Transverse colon (tissue), 4 donors: ENCODE measurements at regions of chr10 and their contacts with region 1.

Region 1: GRCh38 chr10:71893920-71894319 is 42.9 kb upstream of the PSAP start:
- DNase-seq: no peak
- H3K4me3 ChIP-seq: no peak overlapping the region
- H3K27ac ChIP-seq: no peak overlapping the region
- H3K4me1 ChIP-seq: peaks cover 0 to 14% (median 9%) of the 10 kb centered on the region in 4 donors
- H3K27me3 ChIP-seq: peaks cover 3% of the 10 kb centered on the region
- CTCF ChIP-seq: no peak
- EP300 ChIP-seq: no peak
- POLR2A ChIP-seq: no peak

Region 2: DNA sequence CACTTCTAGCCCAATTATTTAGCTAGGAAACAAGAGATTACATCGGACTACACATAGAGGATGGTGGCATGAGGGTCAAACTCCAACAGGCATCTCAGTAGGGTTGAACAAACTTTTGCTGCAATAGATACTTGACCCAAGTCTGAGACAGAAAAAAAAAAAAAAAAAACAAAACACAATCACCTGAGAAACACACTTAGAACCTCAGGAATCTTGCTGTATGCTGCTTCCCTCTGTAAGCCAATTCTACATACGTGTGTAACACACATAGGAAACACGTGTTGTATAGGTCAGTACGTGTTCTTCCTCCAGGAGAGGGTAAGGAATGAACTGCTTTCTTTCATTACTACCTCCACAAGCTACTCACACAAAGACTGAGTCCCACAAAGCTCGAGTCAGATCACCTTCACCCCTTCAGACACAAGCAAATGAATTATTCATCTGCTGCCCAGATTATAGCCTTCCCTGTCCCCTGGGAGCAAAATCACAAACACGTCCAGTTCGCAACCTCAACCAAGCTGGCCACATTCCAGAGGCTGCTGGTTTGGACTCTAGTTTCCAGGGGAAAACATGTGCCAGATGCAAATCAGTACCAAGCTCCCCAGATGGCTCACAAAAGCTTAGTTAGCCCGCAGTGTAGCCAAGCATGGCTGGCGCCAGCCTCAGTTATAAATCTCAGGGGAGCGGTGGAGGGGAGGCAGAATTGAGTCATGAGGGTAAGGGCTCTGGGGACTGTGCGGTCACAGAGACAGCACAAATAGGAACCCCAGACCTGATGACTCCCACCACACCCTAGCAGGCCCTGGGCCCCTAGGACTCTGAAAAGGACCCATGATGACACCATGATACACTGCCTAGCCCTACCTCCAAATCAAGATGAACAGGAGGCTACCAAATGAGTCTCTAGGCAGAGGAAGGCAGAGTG is 58.0 kb before region 1 on chr10:
- in situ Hi-C with region 1: no loop called
- intact Hi-C with region 1: loop called (anchors 10 kb)
- DNase-seq: peak; percentile 65
- H3K4me3 ChIP-seq: no peak overlapping the region
- H3K27ac ChIP-seq: peak overlapping the region; percentile 54 to 73 (median 67)
- H3K4me1 ChIP-seq: peaks cover 26 to 67% (median 47%) of the 10 kb centered on the region in 4 donors
- H3K27me3 ChIP-seq: no peaks in the 10 kb centered on the region
- CTCF ChIP-seq: no peak
- EP300 ChIP-seq: no peak
- POLR2A ChIP-seq: no peak

Region 3: DNA sequence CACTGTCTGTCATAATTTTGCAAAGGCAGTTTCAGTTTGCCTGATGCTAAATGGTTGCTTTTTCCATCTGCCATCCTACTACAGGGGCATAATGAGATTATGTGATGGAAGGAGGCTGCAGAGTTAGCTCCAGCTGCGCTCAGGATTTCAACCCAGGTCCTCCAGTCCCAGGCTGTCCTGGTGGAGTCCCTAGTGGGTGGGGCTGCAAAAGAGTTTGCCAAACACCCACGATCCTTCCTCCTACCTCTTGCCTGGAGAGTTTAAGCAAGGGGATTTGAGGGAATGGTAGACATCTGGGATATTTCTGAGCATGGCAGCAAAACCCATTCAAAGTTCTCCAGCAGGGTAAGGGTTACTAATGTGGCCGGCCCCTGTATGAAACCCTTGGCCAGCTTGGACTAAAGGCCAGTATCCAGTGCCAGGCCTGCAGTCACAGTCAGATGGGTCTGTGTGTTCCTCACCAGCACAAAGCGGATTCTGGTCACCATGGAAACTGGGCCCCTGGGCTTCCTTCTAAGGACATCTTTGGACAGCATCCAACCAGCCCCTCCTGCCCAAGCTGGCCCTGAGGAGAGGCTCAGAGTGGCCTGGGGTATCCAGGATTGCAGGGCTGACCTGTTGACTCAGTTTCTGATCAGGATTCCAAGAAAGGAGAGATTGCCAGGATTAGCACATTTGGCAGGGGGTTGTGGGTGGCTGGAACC is 27.6 kb after region 1 on chr10:
- in situ Hi-C with region 1: no loop called
- intact Hi-C with region 1: no loop called
- DNase-seq: peak; percentile 37
- H3K4me3 ChIP-seq: no peak overlapping the region
- H3K27ac ChIP-seq: peak overlapping the region; percentile 73 to 79 (median 78)
- H3K4me1 ChIP-seq: peaks cover 2 to 28% (median 19%) of the 10 kb centered on the region in 4 donors
- H3K27me3 ChIP-seq: no peaks in the 10 kb centered on the region
- CTCF ChIP-seq: no peak
- EP300 ChIP-seq: no peak
- POLR2A ChIP-seq: no peak

Region 4: DNA sequence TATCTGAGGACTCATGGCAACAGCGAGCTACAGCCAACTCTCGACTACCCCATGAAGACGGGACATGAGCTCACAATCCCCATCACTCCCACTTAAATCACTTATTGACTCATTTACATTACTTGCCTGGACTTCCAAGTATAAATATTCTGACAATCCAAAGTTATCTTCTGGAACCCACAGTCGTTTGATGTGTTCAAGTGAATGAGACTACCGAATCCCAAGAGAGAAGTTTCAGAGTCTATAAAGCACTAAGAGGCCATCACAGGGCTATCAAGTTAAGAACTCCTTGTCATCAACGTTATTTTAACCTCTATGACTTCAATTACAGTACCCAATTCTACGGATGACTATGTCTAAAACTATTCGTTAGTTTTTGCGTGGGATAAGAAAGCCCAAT is 310.4 kb after region 1 on chr10:
- in situ Hi-C with region 1: no loop called
- intact Hi-C with region 1: no loop called
- DNase-seq: no peak
- H3K4me3 ChIP-seq: no peak overlapping the region
- H3K27ac ChIP-seq: no peak overlapping the region
- H3K4me1 ChIP-seq: no peaks in the 10 kb centered on the region
- H3K27me3 ChIP-seq: no peaks in the 10 kb centered on the region
- CTCF ChIP-seq: no peak
- EP300 ChIP-seq: no peak
- POLR2A ChIP-seq: no peak